HEK293 (cell line): ENCODE measurements at regions of chr1 and their contacts with region 1.

Region 1: GRCh38 chr1:45669859-45670655 is 16.3 kb downstream of the GPBP1L1 start:
- H3K4me3 ChIP-seq: no peak overlapping the region
- H3K27ac ChIP-seq: no peak overlapping the region
- H3K4me1 ChIP-seq: no peaks in the 10 kb centered on the region
- CTCF ChIP-seq: no peak

Region 2: DNA sequence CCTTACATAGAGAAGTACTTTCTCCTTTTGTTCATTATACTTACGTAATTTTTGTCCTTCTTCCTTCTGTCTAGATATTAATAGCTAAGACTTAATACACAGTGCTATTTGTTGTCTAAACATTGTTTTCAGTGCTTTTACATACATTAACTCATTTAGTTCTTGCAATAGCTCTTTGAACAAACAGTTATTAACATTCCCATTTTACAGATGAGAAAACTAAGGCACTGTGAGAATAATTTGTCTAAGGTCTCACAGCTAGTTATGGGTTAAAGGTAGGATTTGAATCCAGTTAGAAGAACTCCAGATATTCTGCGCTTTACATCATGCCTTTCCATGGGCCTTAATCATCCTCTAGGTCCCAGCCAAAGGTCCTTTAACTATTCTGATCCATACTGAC is 65.8 kb before region 1 on chr1:
- CTCF ChIA-PET with region 1: no interaction called
- POLR2A ChIA-PET with region 1: interaction called, 10 read pairs
- H3K4me3 ChIP-seq: no peak overlapping the region
- H3K27ac ChIP-seq: no peak overlapping the region
- H3K4me1 ChIP-seq: no peaks in the 10 kb centered on the region; the same call in 1 of the 2 replicates
- CTCF ChIP-seq: no peak

Region 3: DNA sequence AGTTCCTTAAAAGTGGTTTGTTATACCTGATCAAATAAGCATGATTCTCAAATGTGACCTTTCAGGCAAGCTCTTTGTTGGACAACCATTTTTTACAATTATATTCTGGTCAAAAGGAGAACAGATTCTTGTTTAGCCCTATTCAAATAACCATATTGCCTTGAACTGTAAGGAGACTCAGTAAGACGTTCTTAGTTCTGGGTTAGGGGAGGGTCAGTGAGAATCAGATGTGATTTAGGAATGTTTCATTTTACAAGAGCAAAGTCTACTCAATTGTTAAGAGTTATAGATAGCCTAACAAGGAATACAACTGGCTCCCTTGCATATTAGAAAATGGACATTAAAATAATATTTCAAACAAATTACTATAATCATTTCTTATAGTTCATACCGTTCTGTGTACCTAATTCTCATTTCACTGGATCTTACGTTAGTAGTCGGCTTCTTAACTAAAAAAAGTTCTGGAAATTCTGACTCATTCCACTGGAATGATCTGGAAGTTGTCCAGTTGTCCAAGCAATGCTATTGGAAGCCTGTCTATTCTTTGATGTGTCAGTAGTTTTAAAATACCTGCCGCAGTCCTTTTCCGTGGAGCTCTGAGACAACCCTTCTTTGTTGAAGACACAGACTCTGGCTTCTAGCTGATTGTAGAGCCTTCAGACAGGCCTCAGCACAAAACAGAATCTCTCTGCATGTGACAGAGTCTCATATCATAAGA is 222.2 kb after region 1 on chr1:
- CTCF ChIA-PET with region 1: no interaction called
- POLR2A ChIA-PET with region 1: no interaction called
- H3K4me3 ChIP-seq: no peak overlapping the region
- H3K27ac ChIP-seq: no peak overlapping the region
- H3K4me1 ChIP-seq: peaks cover under 1% of the 10 kb centered on the region; the same call in 1 of the 2 replicates
- CTCF ChIP-seq: no peak